CD4-positive, alpha-beta T cell (primary cell): ENCODE measurements at regions of chr3 and their contacts with region 1.

Region 1: GRCh38 chr3:66971891-66972551 is 26.1 kb upstream of the KBTBD8 start:
- DNase-seq: peak; percentile 35 to 78 (median 51)
- ATAC-seq: peak; percentile 93
- H3K4me3 ChIP-seq: peak overlapping the region; percentile 65
- H3K4me3 Mint-ChIP-seq: peak overlapping the region; percentile 92
- H3K27ac ChIP-seq: peak overlapping the region in 1 of 2 donors; percentile 53
- H3K27ac Mint-ChIP-seq: peak overlapping the region; percentile 69
- H3K4me1 ChIP-seq: peaks cover 12% of the 10 kb centered on the region
- H3K4me1 Mint-ChIP-seq: peaks cover 18% of the 10 kb centered on the region
- H3K27me3 ChIP-seq: no peaks in the 10 kb centered on the region
- H3K27me3 Mint-ChIP-seq: peaks cover 7% of the 10 kb centered on the region
- CTCF ChIP-seq: peak; percentile 87

Region 2: GRCh38 chr3:66428733-66429132 is 543.3 kb before region 1 on chr3:
- CTCF ChIA-PET with region 1: no interaction called
- POLR2A ChIA-PET with region 1: no interaction called
- intact Hi-C with region 1: no loop called
- DNase-seq: no peak
- ATAC-seq: no peak
- H3K4me3 ChIP-seq: no peak overlapping the region
- H3K4me3 Mint-ChIP-seq: no peak overlapping the region
- H3K27ac ChIP-seq: no peak overlapping the region
- H3K27ac Mint-ChIP-seq: no peak overlapping the region
- H3K4me1 ChIP-seq: peaks cover 14% of the 10 kb centered on the region
- H3K4me1 Mint-ChIP-seq: peaks cover 29% of the 10 kb centered on the region
- H3K27me3 ChIP-seq: no peaks in the 10 kb centered on the region
- H3K27me3 Mint-ChIP-seq: no peaks in the 10 kb centered on the region
- CTCF ChIP-seq: no peak

Region 3: GRCh38 chr3:66989860-66990665 is 18.0 kb after region 1 on chr3:
- CTCF ChIA-PET with region 1: interaction called, 11 read pairs
- POLR2A ChIA-PET with region 1: no interaction called
- intact Hi-C with region 1: no loop called
- DNase-seq: peak in 2 of 14 experiments; percentile 7 to 33
- ATAC-seq: no peak
- H3K4me3 ChIP-seq: no peak overlapping the region
- H3K4me3 Mint-ChIP-seq: no peak overlapping the region
- H3K27ac ChIP-seq: no peak overlapping the region
- H3K27ac Mint-ChIP-seq: no peak overlapping the region
- H3K4me1 ChIP-seq: no peaks in the 10 kb centered on the region
- H3K4me1 Mint-ChIP-seq: no peaks in the 10 kb centered on the region
- H3K27me3 ChIP-seq: peaks cover 0 to 8% of the 10 kb centered on the region in 2 experiments
- H3K27me3 Mint-ChIP-seq: peaks cover 35% of the 10 kb centered on the region
- CTCF ChIP-seq: peak; percentile 9

Region 4: GRCh38 chr3:66998113-66998903 is 26.3 kb after region 1 on chr3 and contains the start of gene KBTBD8:
- CTCF ChIA-PET with region 1: interaction called, 7 read pairs
- POLR2A ChIA-PET with region 1: interaction called, 29 read pairs
- intact Hi-C with region 1: loop called in 1 of 2 experiments (anchors 2 kb)
- DNase-seq: peak; percentile 7 to 99 (median 95)
- ATAC-seq: peak; percentile 94
- H3K4me3 ChIP-seq: peak within 1 kb of the TSS; percentile 73
- H3K4me3 Mint-ChIP-seq: peak within 1 kb of the TSS; percentile 98
- H3K27ac ChIP-seq: peak within 1 kb of the TSS; percentile 53 to 67
- H3K27ac Mint-ChIP-seq: peak within 1 kb of the TSS; percentile 89
- H3K4me1 ChIP-seq: peaks cover 16% of the 10 kb centered on the region
- H3K4me1 Mint-ChIP-seq: peaks cover 39% of the 10 kb centered on the region
- H3K27me3 ChIP-seq: peaks cover 0 to 18% of the 10 kb centered on the region in 2 experiments
- H3K27me3 Mint-ChIP-seq: peaks cover 34% of the 10 kb centered on the region
- CTCF ChIP-seq: no peak
- total RNA-seq, gene KBTBD8: 7.1 to 7.7 TPM

Region 5: GRCh38 chr3:67037615-67038014 is 65.6 kb after region 1 on chr3:
- CTCF ChIA-PET with region 1: no interaction called
- POLR2A ChIA-PET with region 1: no interaction called
- intact Hi-C with region 1: loop called in 1 of 2 experiments (anchors 5 kb)
- DNase-seq: peak in 1 of 14 experiments; percentile 7
- ATAC-seq: no peak
- H3K4me3 ChIP-seq: no peak overlapping the region
- H3K4me3 Mint-ChIP-seq: no peak overlapping the region
- H3K27ac ChIP-seq: no peak overlapping the region
- H3K27ac Mint-ChIP-seq: no peak overlapping the region
- H3K4me1 ChIP-seq: no peaks in the 10 kb centered on the region
- H3K4me1 Mint-ChIP-seq: no peaks in the 10 kb centered on the region
- H3K27me3 ChIP-seq: no peaks in the 10 kb centered on the region
- H3K27me3 Mint-ChIP-seq: peaks cover 4% of the 10 kb centered on the region
- CTCF ChIP-seq: no peak

Region 6: GRCh38 chr3:67790043-67790442 is 818.0 kb after region 1 on chr3:
- CTCF ChIA-PET with region 1: no interaction called
- POLR2A ChIA-PET with region 1: no interaction called
- intact Hi-C with region 1: loop called in 1 of 2 experiments (anchors 10 kb)
- DNase-seq: peak; percentile 31 to 79 (median 60)
- ATAC-seq: peak; percentile 73
- H3K4me3 ChIP-seq: no peak overlapping the region
- H3K4me3 Mint-ChIP-seq: no peak overlapping the region
- H3K27ac ChIP-seq: no peak overlapping the region
- H3K27ac Mint-ChIP-seq: no peak overlapping the region
- H3K4me1 ChIP-seq: peaks cover 5% of the 10 kb centered on the region
- H3K4me1 Mint-ChIP-seq: peaks cover 16% of the 10 kb centered on the region
- H3K27me3 ChIP-seq: no peaks in the 10 kb centered on the region
- H3K27me3 Mint-ChIP-seq: no peaks in the 10 kb centered on the region
- CTCF ChIP-seq: peak; percentile 84

Region 7: GRCh38 chr3:68876112-68876713 is 1904.2 kb after region 1 on chr3:
- CTCF ChIA-PET with region 1: interaction called, 4 read pairs
- POLR2A ChIA-PET with region 1: interaction called, 5 read pairs
- intact Hi-C with region 1: loop called (anchors 2 kb)
- DNase-seq: peak in 7 of 14 experiments; percentile 2 to 72 (median 31)
- ATAC-seq: peak; percentile 44
- H3K4me3 ChIP-seq: no peak overlapping the region
- H3K4me3 Mint-ChIP-seq: no peak overlapping the region
- H3K27ac ChIP-seq: no peak overlapping the region
- H3K27ac Mint-ChIP-seq: no peak overlapping the region
- H3K4me1 ChIP-seq: no peaks in the 10 kb centered on the region
- H3K4me1 Mint-ChIP-seq: no peaks in the 10 kb centered on the region
- H3K27me3 ChIP-seq: no peaks in the 10 kb centered on the region
- H3K27me3 Mint-ChIP-seq: peaks cover 39% of the 10 kb centered on the region
- CTCF ChIP-seq: peak; percentile 92

Region 8: GRCh38 chr3:68893600-68894239 is 1921.7 kb after region 1 on chr3:
- CTCF ChIA-PET with region 1: interaction called, 8 read pairs
- POLR2A ChIA-PET with region 1: no interaction called
- intact Hi-C with region 1: loop called in 1 of 2 experiments (anchors 5 kb)
- DNase-seq: peak in 4 of 14 experiments; percentile 4 to 60 (median 52)
- ATAC-seq: no peak
- H3K4me3 ChIP-seq: no peak overlapping the region
- H3K4me3 Mint-ChIP-seq: no peak overlapping the region
- H3K27ac ChIP-seq: no peak overlapping the region
- H3K27ac Mint-ChIP-seq: no peak overlapping the region
- H3K4me1 ChIP-seq: no peaks in the 10 kb centered on the region
- H3K4me1 Mint-ChIP-seq: no peaks in the 10 kb centered on the region
- H3K27me3 ChIP-seq: peaks cover 0 to 4% of the 10 kb centered on the region in 2 experiments
- H3K27me3 Mint-ChIP-seq: peaks cover 14% of the 10 kb centered on the region
- CTCF ChIP-seq: peak; percentile 77